RWPE1 (cell line): ENCODE measurements at regions of chr19 and their contacts with region 1.

Region 1: GRCh38 chr19:43446746-43447489 is 18.5 kb downstream of the LYPD3 start:
- DNase-seq: peak; percentile 76
- H3K27ac ChIP-seq: no peak overlapping the region
- CTCF ChIP-seq: peak; percentile 90

Region 2: DNA sequence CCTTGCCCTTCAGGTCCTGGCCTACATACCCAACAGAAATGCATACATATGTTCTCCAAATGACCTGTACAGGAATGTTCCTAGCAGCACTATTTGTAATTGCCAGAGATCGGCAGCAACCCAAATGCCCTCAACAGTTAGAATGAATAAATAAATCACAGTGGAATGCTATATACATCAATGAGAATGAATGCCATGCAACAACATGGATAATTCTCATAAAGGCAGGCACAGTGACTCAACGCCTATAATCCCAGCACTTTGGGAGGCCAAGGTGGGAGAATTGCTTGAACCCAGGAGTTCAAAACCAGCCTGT is 13.6 kb before region 1 on chr19:
- CTCF ChIA-PET with region 1: interaction called, 11 read pairs
- POLR2A ChIA-PET with region 1: no interaction called
- DNase-seq: no peak
- H3K27ac ChIP-seq: no peak overlapping the region
- CTCF ChIP-seq: no peak

Region 3: GRCh38 chr19:43519436-43520088 is 72.6 kb after region 1 on chr19:
- CTCF ChIA-PET with region 1: interaction called, 63 read pairs
- POLR2A ChIA-PET with region 1: no interaction called
- DNase-seq: peak; percentile 88
- H3K27ac ChIP-seq: peak overlapping the region; percentile 35
- CTCF ChIP-seq: peak; percentile 85